PC-3 (cell line): ENCODE measurements at regions of chr2 and their contacts with region 1.

Region 1: DNA sequence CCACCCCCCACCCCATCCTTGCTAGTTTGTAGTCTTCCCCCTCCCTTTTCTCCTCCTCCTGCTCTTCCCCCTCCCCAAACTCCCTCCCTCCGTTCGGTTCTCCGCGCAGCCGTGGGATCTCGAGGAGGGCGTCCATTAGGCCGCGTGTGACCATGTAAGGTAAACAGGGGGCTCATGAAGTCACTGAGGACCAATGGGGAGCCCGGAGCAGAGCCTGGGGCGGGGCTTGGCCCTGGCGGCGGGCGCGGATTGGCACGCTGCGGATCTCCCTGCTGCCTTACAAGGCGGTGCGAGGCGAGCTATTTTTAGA is 246 bp upstream of the KLF7 start:
- DNase-seq: peak; percentile 98
- ATAC-seq: peak; percentile 81
- H3K4me3 ChIP-seq: peak overlapping the region; percentile 94
- H3K27ac ChIP-seq: peak overlapping the region; percentile 81
- H3K4me1 ChIP-seq: peaks cover 40% of the 10 kb centered on the region
- H3K27me3 ChIP-seq: no peaks in the 10 kb centered on the region
- CTCF ChIP-seq: no peak

Region 2: GRCh38 chr2:206614825-206615224 is 551.2 kb before region 1 on chr2:
- CTCF ChIA-PET with region 1: no interaction called
- POLR2A ChIA-PET with region 1: no interaction called
- intact Hi-C with region 1: loop called (anchors 10 kb)
- DNase-seq: peak; percentile 88
- ATAC-seq: peak; percentile 57
- H3K4me3 ChIP-seq: peak overlapping the region; percentile 3; the same call in 1 of the 2 replicates
- H3K27ac ChIP-seq: peak overlapping the region; percentile 84
- H3K4me1 ChIP-seq: peaks cover 73% of the 10 kb centered on the region
- H3K27me3 ChIP-seq: no peaks in the 10 kb centered on the region
- CTCF ChIP-seq: no peak

Region 3: GRCh38 chr2:206981739-206982340 is 184.2 kb before region 1 on chr2:
- CTCF ChIA-PET with region 1: interaction called, 4 read pairs
- POLR2A ChIA-PET with region 1: no interaction called
- intact Hi-C with region 1: loop called (anchors 2 kb)
- DNase-seq: peak; percentile 82
- ATAC-seq: peak; percentile 82
- H3K4me3 ChIP-seq: no peak overlapping the region
- H3K27ac ChIP-seq: no peak overlapping the region
- H3K4me1 ChIP-seq: peaks cover 30% of the 10 kb centered on the region
- H3K27me3 ChIP-seq: no peaks in the 10 kb centered on the region
- CTCF ChIP-seq: peak; percentile 93

Region 4: DNA sequence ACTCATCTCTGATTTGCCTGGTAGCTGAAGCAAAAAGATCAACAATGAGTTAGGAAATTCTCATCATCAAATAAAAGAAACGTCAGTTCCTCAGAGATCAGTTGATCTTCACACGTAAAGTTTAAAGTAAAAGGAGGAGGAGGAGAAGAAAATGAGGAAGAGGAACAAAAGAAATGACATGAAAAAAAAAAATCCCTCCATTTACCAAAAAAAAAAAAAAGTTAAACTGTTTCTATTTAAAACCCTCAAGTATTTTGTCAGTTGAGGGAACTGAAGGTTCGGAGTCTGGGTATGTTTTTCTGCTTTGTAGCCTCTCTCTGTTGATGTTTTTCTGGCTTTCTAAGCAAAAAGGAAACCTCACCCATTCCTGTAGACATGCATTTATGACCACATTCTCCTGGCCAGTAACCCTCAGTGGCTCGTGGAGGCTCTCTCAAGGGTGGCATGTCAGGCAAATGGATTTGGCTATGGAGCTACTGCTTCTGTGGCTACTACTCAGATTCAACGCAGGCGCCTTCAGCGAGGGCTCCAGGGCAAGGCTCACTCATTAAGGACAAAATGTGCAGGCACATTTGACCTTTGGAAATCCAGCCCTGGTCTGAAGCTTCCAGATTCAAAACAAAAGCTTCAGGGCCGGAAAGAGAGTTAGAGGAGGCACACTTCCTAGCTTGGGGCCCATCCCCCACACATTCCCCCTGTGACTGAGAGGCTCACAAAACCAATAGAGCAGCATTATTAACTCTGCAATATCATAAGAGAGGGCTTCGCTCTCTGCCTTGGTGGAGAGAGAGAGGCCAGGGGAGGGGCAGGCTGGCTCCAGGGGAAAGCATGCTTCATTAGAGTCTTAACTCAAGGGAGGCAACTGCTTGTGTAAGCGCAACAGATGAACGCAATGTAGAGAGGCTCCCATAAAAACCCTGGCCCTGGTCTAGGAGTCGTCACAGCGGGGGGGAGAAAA is 22.5 kb before region 1 on chr2:
- CTCF ChIA-PET with region 1: no interaction called
- POLR2A ChIA-PET with region 1: no interaction called
- intact Hi-C with region 1: no loop called
- DNase-seq: no peak
- ATAC-seq: no peak
- H3K4me3 ChIP-seq: no peak overlapping the region
- H3K27ac ChIP-seq: no peak overlapping the region
- H3K4me1 ChIP-seq: peaks cover 6% of the 10 kb centered on the region; the same call in 1 of the 2 replicates
- H3K27me3 ChIP-seq: no peaks in the 10 kb centered on the region
- CTCF ChIP-seq: no peak

Region 5: DNA sequence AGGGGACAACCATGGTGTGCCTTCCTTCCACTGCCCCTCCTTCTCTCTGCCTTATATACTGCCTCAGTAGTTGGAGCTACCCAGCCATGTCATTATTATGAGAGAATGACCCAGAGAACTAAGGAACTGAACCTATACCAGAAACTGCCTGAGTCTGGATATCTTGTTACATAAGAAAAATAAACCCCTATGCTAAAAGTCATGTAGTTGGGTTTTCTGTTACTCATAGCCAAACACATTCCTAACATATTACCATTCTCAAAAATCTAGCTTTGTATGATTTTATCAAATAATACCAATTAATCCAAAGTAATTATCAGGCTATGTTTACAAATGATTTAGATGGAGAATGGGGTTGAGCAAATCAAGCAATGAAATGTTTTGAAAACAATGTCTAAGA is 14.7 kb after region 1 on chr2:
- CTCF ChIA-PET with region 1: no interaction called
- POLR2A ChIA-PET with region 1: no interaction called
- intact Hi-C with region 1: loop called (anchors 1 kb)
- DNase-seq: peak; percentile 27
- ATAC-seq: no peak
- H3K4me3 ChIP-seq: no peak overlapping the region
- H3K27ac ChIP-seq: peak overlapping the region; percentile 60
- H3K4me1 ChIP-seq: peaks cover 51% of the 10 kb centered on the region
- H3K27me3 ChIP-seq: no peaks in the 10 kb centered on the region
- CTCF ChIP-seq: no peak

Region 6: DNA sequence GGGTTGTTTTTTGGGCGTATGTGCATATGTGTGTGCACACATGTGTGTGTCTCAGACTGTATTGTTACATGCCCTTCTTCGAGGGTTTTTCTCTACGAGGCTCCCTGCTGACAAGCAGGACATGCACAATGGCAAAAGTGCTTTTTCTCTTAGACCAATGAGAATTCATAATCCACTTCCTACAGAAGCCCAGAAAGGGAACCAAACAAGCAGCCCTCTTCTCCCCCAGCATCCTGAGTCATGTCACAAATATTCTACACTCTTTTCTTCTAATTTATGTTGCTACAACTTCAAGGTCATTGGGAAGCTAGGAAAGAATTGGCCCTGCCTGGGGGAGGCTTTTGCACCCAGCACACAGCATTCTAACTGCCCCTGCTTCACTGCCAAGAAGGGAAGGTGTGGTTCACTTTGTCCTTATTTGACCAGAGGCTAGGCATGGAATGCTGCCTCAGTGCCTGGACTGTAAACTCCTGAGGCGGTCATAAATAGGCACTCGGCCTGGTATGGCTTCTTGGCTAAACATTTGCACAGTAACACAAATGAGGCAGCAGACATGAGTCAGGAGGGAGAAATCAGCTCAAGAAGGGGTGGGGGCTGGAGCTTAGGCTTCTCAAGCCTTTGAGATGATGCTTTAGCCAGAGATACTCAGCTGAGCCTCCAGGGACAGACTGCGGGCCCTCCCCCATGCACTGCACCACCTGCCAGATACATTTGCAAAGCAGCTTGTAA is 92.4 kb after region 1 on chr2:
- CTCF ChIA-PET with region 1: no interaction called
- POLR2A ChIA-PET with region 1: no interaction called
- intact Hi-C with region 1: loop called (anchors 2 kb)
- DNase-seq: peak; percentile 96
- ATAC-seq: peak; percentile 76
- H3K4me3 ChIP-seq: no peak overlapping the region
- H3K27ac ChIP-seq: peak overlapping the region; percentile 55
- H3K4me1 ChIP-seq: peaks cover 82% of the 10 kb centered on the region
- H3K27me3 ChIP-seq: no peaks in the 10 kb centered on the region
- CTCF ChIP-seq: no peak

Region 7: GRCh38 chr2:207334624-207335371 is 168.8 kb after region 1 on chr2:
- CTCF ChIA-PET with region 1: no interaction called
- POLR2A ChIA-PET with region 1: interaction called, 3 read pairs
- intact Hi-C with region 1: loop called (anchors 2 kb)
- DNase-seq: peak; percentile 94
- ATAC-seq: peak; percentile 71
- H3K4me3 ChIP-seq: peak overlapping the region; percentile 57
- H3K27ac ChIP-seq: peak overlapping the region; percentile 92
- H3K4me1 ChIP-seq: peaks cover 55% of the 10 kb centered on the region
- H3K27me3 ChIP-seq: no peaks in the 10 kb centered on the region
- CTCF ChIP-seq: no peak

Region 8: DNA sequence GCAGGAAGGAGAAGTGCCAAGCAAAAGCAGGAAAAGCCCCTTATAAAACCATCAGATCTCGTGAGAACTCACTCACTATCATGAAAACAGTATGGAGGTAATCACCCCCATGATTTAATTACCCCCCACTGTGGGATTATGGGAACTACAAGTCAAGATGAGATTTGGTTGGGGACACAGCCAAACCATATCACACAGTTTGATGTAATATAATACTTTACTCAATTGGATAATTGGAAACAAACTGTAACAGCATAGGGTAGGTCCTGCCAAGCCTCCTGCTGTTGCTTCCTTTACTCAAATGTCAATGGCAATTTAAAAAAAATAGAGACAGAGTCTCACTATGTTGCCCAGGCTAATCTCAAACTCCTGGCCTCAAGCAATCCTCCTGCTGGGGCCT is 474.7 kb after region 1 on chr2:
- CTCF ChIA-PET with region 1: no interaction called
- POLR2A ChIA-PET with region 1: no interaction called
- intact Hi-C with region 1: no loop called
- DNase-seq: no peak
- ATAC-seq: no peak
- H3K4me3 ChIP-seq: no peak overlapping the region
- H3K27ac ChIP-seq: no peak overlapping the region
- H3K4me1 ChIP-seq: 0 out of 2 replicates have a peak, but pooled peaks cover 2% of the 10 kb centered on the region
- H3K27me3 ChIP-seq: no peaks in the 10 kb centered on the region
- CTCF ChIP-seq: no peak

Region 9: GRCh38 chr2:207725873-207726578 is 560.0 kb after region 1 on chr2:
- CTCF ChIA-PET with region 1: no interaction called
- POLR2A ChIA-PET with region 1: no interaction called
- intact Hi-C with region 1: loop called (anchors 10 kb)
- DNase-seq: peak; percentile 35
- ATAC-seq: peak; percentile 26
- H3K4me3 ChIP-seq: no peak overlapping the region
- H3K27ac ChIP-seq: peak overlapping the region; percentile 54; the same call in 1 of the 2 replicates
- H3K4me1 ChIP-seq: peaks cover 49% of the 10 kb centered on the region
- H3K27me3 ChIP-seq: no peaks in the 10 kb centered on the region
- CTCF ChIP-seq: no peak